AG04450 (cell line): ENCODE measurements at regions of chr18 and their contacts with region 1.

Region 1: GRCh38 chr18:74342416-74343043 is 26.9 kb downstream of the C18orf63 start:
- DNase-seq: peak; percentile 16
- H3K4me3 ChIP-seq: no peak overlapping the region
- H3K27ac ChIP-seq: no peak overlapping the region
- H3K27me3 ChIP-seq: no peaks in the 10 kb centered on the region
- CTCF ChIP-seq: peak; percentile 60

Region 2: DNA sequence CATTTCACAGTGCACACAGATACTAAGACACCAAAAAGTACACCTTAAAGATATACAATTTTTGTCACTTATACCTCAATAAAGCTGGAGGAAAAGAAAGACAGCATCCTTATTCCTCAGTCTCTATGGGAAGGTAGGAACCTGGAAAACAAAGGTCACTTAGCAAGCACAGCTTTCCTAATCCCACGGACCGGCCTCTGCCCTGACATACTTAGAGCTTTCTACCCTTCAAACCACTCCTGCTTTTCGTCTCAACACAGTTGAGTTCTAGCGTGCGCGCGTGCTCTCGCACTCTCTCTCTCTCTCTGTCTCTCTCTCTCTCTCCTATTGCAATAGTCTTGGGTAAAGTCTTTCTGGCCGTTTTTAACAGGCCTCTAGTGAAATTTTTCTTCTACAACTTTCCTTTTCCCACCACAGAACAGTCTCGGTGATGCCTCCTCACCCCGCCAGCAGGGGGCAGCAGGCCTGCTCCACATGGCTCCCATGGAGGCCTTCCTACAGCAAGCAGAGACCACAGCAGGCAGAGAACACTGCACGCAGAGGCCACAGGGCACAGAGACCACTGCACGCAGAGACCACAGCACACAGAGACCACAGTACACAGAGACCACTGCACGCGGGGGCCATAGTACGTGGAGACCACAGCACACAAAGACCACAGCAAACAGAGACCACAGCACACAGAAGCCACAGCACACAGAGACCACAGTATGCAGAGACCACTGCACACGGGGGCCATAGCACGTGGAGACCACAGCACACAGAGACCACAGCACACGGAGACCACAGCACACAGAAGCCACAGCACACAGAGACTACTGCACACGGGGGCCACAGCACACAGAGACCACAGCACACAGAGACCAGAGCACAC is 301.8 kb before region 1 on chr18:
- CTCF ChIA-PET with region 1: interaction called, 10 read pairs
- POLR2A ChIA-PET with region 1: no interaction called
- DNase-seq: no peak
- H3K4me3 ChIP-seq: no peak overlapping the region
- H3K27ac ChIP-seq: no peak overlapping the region
- H3K27me3 ChIP-seq: no peaks in the 10 kb centered on the region
- CTCF ChIP-seq: peak; percentile 55

Region 3: GRCh38 chr18:74081966-74082741 is 260.4 kb before region 1 on chr18:
- CTCF ChIA-PET with region 1: interaction called, 29 read pairs
- POLR2A ChIA-PET with region 1: no interaction called
- DNase-seq: no peak
- H3K4me3 ChIP-seq: no peak overlapping the region
- H3K27ac ChIP-seq: no peak overlapping the region
- H3K27me3 ChIP-seq: peaks cover 10% of the 10 kb centered on the region
- CTCF ChIP-seq: peak; percentile 62

Region 4: DNA sequence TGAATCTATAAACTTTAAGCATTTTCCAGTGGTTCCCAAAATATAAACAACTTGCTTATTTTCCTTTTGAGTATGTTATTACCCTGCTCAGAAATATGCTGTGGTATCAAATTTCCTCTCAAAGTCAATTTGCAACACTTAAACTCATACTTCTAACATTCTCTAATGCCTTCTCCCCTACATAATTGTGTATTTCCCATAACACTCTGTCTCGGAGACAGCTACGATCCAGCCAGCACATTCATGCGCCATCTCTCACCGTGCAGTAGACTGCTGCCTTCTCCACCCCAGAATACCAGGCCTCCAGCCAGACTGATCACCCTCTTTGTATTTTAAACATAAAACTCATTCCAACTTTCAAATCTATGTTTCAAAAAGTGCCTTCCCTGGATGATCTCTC is 152.4 kb before region 1 on chr18:
- CTCF ChIA-PET with region 1: interaction called, 29 read pairs
- POLR2A ChIA-PET with region 1: no interaction called
- DNase-seq: peak; percentile 60
- H3K4me3 ChIP-seq: no peak overlapping the region
- H3K27ac ChIP-seq: peak overlapping the region; percentile 75
- H3K27me3 ChIP-seq: peaks cover 3% of the 10 kb centered on the region
- CTCF ChIP-seq: no peak

Region 5: GRCh38 chr18:74196220-74197119 is 146.1 kb before region 1 on chr18:
- CTCF ChIA-PET with region 1: interaction called, 60 read pairs
- POLR2A ChIA-PET with region 1: no interaction called
- DNase-seq: peak; percentile 15
- H3K4me3 ChIP-seq: peak overlapping the region; percentile 43
- H3K27ac ChIP-seq: no peak overlapping the region
- H3K27me3 ChIP-seq: peaks cover 3% of the 10 kb centered on the region
- CTCF ChIP-seq: peak; percentile 86

Region 6: DNA sequence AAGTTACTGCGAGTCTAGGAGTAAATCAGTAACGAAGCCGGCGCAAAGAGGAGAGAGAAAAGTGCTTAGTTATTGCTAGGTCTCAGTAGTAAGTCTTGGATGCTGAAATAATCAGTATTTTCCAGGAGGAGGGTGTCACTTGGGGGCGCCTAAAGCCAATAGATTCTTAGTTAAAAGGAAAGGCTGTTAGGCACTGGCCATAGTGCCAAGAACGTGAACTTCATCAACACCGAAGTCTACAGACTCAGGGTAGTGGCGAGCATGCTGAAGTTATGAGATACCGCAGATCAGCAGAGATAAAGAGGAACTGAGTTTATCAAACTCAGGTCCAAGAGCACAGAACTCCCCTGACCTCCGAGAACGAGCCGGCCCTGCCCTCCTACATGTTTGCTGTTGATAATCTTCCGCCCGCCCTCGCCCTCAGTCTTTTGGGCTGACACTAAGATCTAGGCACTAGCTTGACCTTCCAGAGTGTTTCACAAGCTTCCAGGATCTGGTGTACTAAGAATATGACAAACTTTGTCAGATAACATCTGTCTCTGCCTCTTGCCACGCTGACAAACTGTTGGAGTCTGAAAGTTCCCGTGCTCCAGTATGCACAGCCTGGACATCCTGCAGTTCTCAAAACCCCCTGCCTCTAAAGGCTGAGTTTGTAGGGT is 100.0 kb before region 1 on chr18:
- CTCF ChIA-PET with region 1: interaction called, 15 read pairs
- POLR2A ChIA-PET with region 1: no interaction called
- DNase-seq: no peak
- H3K4me3 ChIP-seq: no peak overlapping the region
- H3K27ac ChIP-seq: no peak overlapping the region
- H3K27me3 ChIP-seq: peaks cover 11% of the 10 kb centered on the region
- CTCF ChIP-seq: no peak

Region 7: DNA sequence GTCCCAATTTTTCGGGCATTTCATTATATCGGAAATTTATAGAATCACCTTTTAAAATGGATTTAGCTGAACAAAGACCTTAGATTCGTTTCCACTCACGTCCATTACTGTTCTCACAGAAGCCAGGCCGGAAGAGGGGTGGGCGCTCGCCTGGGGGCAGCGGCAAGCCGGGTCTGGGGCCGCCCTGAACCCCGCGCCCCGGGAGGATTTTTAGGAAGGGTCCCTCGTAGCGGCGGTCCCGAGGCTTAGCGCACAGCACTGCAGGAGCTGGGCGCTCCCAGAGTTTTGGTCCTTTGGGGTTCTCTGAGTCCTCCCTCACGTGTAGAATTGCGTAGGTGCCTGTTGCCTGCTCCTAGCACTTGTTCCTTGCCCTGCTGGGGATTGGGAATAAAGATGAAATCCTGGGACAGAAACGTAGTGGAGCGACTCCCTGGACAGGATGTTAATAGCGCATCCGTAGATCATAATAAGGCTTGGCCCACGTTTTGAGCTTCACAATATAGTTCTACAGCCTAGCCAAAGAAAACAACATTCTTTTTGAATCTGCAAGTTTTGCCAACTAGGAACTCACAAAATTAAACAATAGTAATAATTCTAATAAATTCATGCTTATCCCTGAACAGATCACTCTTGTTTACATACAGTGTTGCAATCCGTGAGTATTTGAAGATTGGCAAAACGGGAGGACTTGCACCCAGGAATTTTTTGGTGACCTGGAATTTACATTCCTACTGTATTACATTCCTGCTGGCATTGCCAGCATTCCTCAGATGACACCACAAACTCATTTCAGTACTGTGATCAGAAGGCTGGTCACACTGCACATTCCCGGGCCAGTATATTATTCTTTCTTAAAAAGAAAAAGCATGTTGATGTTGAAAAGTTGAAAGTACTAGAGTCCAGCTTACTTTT is 26.0 kb before region 1 on chr18:
- CTCF ChIA-PET with region 1: no interaction called
- POLR2A ChIA-PET with region 1: no interaction called
- DNase-seq: peak; percentile 69
- H3K4me3 ChIP-seq: no peak overlapping the region
- H3K27ac ChIP-seq: peak overlapping the region; percentile 71
- H3K27me3 ChIP-seq: no peaks in the 10 kb centered on the region
- CTCF ChIP-seq: no peak